ENCODE measurements at regions of chr14 and their contacts with region 1.

Region 1: GRCh38 chr14:88379706-88380343 is 5.6 kb upstream of the SPATA7 start:
- H3K4me3 Mint-ChIP-seq: no peak overlapping the region
- H3K27ac Mint-ChIP-seq: no peak overlapping the region
- H3K4me1 Mint-ChIP-seq: no peaks in the 10 kb centered on the region
- H3K27me3 Mint-ChIP-seq: peaks cover 26% of the 10 kb centered on the region

Region 2: DNA sequence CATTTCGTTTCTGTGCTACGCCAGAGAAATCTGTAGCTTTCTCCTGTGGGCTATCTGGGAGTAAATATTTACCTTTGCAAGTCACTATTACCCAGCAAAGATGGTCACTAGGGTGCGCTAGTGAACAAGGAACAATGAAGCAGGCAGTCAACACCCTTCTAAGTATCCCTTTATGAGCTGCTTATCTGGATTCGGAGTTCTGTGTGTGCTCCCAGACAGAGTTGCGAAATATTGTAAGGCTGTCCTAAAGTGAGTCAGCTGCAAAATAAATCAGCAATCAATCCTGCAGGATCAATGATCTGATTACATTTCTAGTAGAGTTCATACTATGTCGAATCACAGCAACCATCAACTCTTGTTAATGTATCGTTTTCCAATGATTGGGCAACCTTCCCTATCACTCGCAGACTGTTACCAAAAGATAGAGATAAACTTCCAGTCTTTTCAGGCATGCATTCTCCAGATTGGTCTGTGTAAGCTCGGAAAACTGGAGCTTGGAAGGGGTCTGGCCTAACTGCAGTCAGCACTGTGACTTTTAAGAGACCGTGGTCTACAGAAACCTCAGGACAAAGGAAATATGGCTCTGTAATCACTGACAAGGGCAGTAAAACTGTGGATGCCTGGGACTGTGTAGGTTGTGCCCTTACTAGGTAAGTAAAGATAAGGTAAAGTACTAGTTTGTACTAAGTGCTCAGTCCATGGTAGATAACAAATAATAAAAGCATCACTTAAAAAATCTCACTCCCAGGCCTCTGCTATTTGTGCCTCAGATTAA is 190.2 kb before region 1 on chr14:
- intact Hi-C with region 1: loop called (anchors 2 kb)
- H3K4me3 Mint-ChIP-seq: no peak overlapping the region
- H3K27ac Mint-ChIP-seq: no peak overlapping the region
- H3K4me1 Mint-ChIP-seq: peaks cover 10% of the 10 kb centered on the region
- H3K27me3 Mint-ChIP-seq: peaks cover 12% of the 10 kb centered on the region

Measured in dendritic cell treated with granulocyte-macrophage colony-stimulating factor and Interleukin-4, amounts not matched to agents 40 ng/mL and 50 ng/mL, for 4 days (primary cell).